ENCODE measurements at regions of chr10 and their contacts with region 1.

Region 1: DNA sequence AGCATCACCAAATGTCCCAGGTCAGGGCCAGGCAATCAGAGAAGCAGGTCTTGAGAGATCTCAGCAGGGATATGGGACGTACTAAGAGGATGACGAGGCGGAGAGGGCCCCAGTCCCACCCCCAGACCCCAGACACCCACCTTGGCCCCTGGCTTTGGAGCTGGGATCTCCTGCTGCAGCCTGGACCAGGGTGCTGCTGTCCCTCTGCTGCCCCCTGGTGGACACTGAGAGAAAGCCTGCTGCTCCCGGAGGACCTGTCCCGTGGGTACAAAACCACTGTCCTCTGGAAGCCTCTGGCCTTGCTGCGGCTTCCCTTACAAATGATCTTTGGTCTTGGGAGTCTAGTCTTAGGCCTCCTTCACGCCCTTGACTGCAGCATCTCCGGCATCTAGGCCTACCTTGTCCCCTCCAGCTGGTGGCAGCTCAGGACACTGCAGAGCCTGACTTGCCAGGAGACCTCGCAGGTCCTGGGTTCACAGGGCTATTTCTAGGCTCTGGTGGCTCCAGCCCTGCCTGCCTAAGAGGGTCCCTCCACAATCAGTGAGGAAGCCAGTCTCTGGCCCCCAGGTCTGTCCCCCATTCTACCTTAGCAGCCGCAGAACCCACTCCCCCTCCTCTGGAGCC is 97.1 kb downstream of the RGS10 start:
- DNase-seq: peak; percentile 51 to 91
- H3K4me3 ChIP-seq: no peak overlapping the region
- H3K27ac ChIP-seq: peak overlapping the region; percentile 29 to 40
- H3K4me1 ChIP-seq: peaks cover 19 to 28% of the 10 kb centered on the region in 2 donors
- H3K27me3 ChIP-seq: no peaks in the 10 kb centered on the region
- CTCF ChIP-seq: peak; percentile 87 to 97 (median 95)

Region 2: GRCh38 chr10:119199231-119199992 is 246.0 kb before region 1 on chr10:
- intact Hi-C with region 1: loop called (anchors 1 kb)
- DNase-seq: peak in 1 of 2 donors; percentile 77
- H3K4me3 ChIP-seq: no peak overlapping the region
- H3K27ac ChIP-seq: no peak overlapping the region
- H3K4me1 ChIP-seq: peaks cover 0 to 4% of the 10 kb centered on the region in 2 donors
- H3K27me3 ChIP-seq: no peaks in the 10 kb centered on the region
- CTCF ChIP-seq: peak; percentile 69 to 89 (median 82)

Region 3: DNA sequence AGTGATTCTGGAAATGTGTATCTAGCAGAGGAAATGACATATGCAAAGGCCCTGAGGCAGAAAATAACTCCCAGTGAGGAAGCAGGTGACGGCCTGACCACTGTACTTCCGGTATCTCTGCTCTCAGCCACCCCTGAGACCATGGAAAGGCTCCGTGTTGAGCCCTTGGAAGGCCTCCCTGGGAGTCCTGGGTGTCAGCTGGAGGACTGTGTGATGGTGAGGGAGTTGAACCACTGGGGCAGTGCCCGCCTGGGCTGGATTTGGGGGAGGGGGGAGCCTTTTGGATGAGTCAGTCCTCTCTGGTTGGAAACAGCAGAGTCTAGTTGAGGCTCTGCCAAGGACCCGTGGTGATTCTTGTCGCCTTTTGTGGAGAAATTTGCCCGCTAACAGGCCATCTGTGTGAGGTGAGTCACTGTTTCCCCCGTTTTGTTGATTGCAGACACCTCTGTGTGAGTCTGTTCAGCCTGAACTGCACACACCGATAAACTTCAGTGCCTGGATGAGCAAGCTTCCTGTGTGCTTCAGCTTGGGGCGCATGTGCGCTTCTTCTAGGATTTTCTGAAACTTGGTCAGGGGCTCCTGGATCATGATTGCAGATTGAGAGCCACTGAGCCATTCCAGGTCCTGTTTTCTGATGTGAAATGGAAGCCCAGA is 139.4 kb before region 1 on chr10:
- intact Hi-C with region 1: loop called (anchors 5 kb)
- DNase-seq: peak; percentile 92 to 97
- H3K4me3 ChIP-seq: peak overlapping the region in 1 of 2 donors; percentile 28
- H3K27ac ChIP-seq: peak overlapping the region; percentile 85 to 95
- H3K4me1 ChIP-seq: peaks cover 32 to 87% of the 10 kb centered on the region in 2 donors
- H3K27me3 ChIP-seq: no peaks in the 10 kb centered on the region
- CTCF ChIP-seq: no peak

Region 4: GRCh38 chr10:119315128-119316001 is 130.1 kb before region 1 on chr10:
- intact Hi-C with region 1: loop called (anchors 2 kb)
- DNase-seq: peak; percentile 75 to 95
- H3K4me3 ChIP-seq: no peak overlapping the region
- H3K27ac ChIP-seq: peak overlapping the region; percentile 86 to 95
- H3K4me1 ChIP-seq: peaks cover 33 to 87% of the 10 kb centered on the region in 2 donors
- H3K27me3 ChIP-seq: no peaks in the 10 kb centered on the region
- CTCF ChIP-seq: no peak

Region 5: GRCh38 chr10:119370111-119370741 is 75.2 kb before region 1 on chr10:
- intact Hi-C with region 1: loop called (anchors 5 kb)
- DNase-seq: peak in 1 of 2 donors; percentile 83
- H3K4me3 ChIP-seq: peak overlapping the region; percentile 17 to 44
- H3K27ac ChIP-seq: peak overlapping the region; percentile 64 to 81
- H3K4me1 ChIP-seq: peaks cover 33 to 57% of the 10 kb centered on the region in 2 donors
- H3K27me3 ChIP-seq: no peaks in the 10 kb centered on the region
- CTCF ChIP-seq: no peak

Region 6: GRCh38 chr10:119680050-119680449 is 234.6 kb after region 1 on chr10:
- intact Hi-C with region 1: loop called (anchors 5 kb)
- DNase-seq: peak in 1 of 2 donors; percentile 79
- H3K4me3 ChIP-seq: no peak overlapping the region
- H3K27ac ChIP-seq: peak overlapping the region; percentile 84 to 89
- H3K4me1 ChIP-seq: peaks cover 16 to 41% of the 10 kb centered on the region in 2 donors
- H3K27me3 ChIP-seq: no peaks in the 10 kb centered on the region
- CTCF ChIP-seq: no peak